ENCODE measurements at regions of chr9 and their contacts with region 1.

Region 1: GRCh38 chr9:129584136-129584535 is 36.8 kb downstream of the C9orf50 start:
- DNase-seq: peak in 8 of 9 donors; percentile 51 to 69 (median 62)
- ATAC-seq: peak; percentile 88
- H3K4me3 ChIP-seq: no peak overlapping the region
- H3K4me3 Mint-ChIP-seq: peak overlapping the region in 7 of 10 donors; percentile 4 to 65 (median 31)
- H3K27ac ChIP-seq: peak overlapping the region; percentile 30
- H3K27ac Mint-ChIP-seq: peak overlapping the region; percentile 43 to 92 (median 76)
- H3K4me1 ChIP-seq: peaks cover 25 to 26% of the 10 kb centered on the region in 2 donors
- H3K4me1 Mint-ChIP-seq: peaks cover 15 to 88% (median 53%) of the 10 kb centered on the region in 7 donors
- H3K27me3 ChIP-seq: no peaks in the 10 kb centered on the region
- H3K27me3 Mint-ChIP-seq: no peaks in the 10 kb centered on the region

Region 2: DNA sequence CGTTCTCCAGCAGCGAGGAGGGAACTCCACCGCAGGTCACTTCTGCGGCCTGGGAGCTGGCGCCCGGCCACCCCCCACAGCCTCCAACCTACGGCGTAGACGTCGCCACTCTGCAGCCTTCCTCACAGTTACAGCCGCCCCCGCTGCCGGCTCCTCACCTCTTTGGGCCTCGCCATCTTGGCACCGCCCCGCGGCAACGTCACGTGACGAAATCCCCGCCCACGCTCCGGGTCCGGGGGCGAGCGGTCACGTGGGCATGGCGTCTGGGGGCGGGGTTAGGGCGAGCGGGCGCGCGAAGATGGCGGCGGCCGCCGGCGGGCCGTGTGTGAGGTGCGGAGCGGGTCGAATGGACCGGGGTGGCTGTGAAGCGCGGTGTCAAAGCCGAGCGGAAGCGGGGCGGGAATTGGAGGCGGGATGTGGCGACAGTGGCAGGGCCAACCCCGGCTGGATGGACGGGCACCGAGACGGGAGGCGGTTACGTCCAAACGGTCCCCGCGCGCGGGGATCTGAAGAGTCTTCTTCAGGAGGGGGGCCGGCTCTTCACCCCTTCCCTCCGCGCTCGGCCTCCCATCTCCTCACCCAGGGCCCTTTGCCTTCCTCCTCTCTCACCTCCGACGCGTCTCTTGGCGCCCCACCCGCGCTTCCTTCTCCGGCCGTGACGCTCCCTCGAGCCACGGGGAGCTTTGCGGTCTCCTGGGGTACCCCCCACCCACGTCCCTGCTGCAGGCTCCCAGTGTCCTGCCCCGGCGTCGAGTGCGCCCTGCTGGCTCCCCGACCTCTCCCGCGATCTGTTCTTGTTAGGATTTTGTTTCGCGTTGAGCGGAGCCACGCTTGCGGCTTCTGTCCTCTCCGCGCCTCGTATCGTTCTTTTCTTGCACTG is 636.5 kb before region 1 on chr9 and contains the starts of genes DOLK and NUP188:
- CTCF ChIA-PET with region 1: no interaction called
- POLR2A ChIA-PET with region 1: no interaction called
- intact Hi-C with region 1: no loop called
- DNase-seq: peak; percentile 96 to 100 (median 98)
- ATAC-seq: peak; percentile 95
- H3K4me3 ChIP-seq: peak within 1 kb of the TSS; percentile 87
- H3K4me3 Mint-ChIP-seq: peak within 1 kb of the TSS; percentile 93 to 99 (median 98)
- H3K27ac ChIP-seq: peak within 1 kb of the TSS; percentile 97
- H3K27ac Mint-ChIP-seq: peak within 1 kb of the TSS; percentile 89 to 99 (median 97)
- H3K4me1 ChIP-seq: peaks cover 8 to 14% of the 10 kb centered on the region in 2 donors
- H3K4me1 Mint-ChIP-seq: peaks cover 16 to 49% (median 32%) of the 10 kb centered on the region in 7 donors
- H3K27me3 ChIP-seq: no peaks in the 10 kb centered on the region
- H3K27me3 Mint-ChIP-seq: no peaks in the 10 kb centered on the region
- total RNA-seq, gene DOLK: 6.0 to 12.8 (median 9.5) TPM
- total RNA-seq, gene NUP188: 55.7 to 98.7 (median 63.7) TPM

Region 3: GRCh38 chr9:129487642-129488409 is 96.3 kb before region 1 on chr9:
- CTCF ChIA-PET with region 1: no interaction called
- POLR2A ChIA-PET with region 1: no interaction called
- intact Hi-C with region 1: loop called in 1 of 2 experiments (anchors 1 kb)
- DNase-seq: peak in 5 of 9 donors; percentile 29 to 54 (median 43)
- ATAC-seq: peak; percentile 3
- H3K4me3 ChIP-seq: peak overlapping the region; percentile 70
- H3K4me3 Mint-ChIP-seq: peak overlapping the region; percentile 75 to 92 (median 90)
- H3K27ac ChIP-seq: peak overlapping the region; percentile 66
- H3K27ac Mint-ChIP-seq: peak overlapping the region; percentile 87 to 99 (median 94)
- H3K4me1 ChIP-seq: peaks cover 32 to 46% of the 10 kb centered on the region in 2 donors
- H3K4me1 Mint-ChIP-seq: peaks cover 36 to 68% (median 58%) of the 10 kb centered on the region in 7 donors
- H3K27me3 ChIP-seq: no peaks in the 10 kb centered on the region
- H3K27me3 Mint-ChIP-seq: no peaks in the 10 kb centered on the region

Region 4: GRCh38 chr9:129597355-129598088 is 13.4 kb after region 1 on chr9:
- CTCF ChIA-PET with region 1: no interaction called
- POLR2A ChIA-PET with region 1: interaction called, 4 read pairs
- intact Hi-C with region 1: loop called in 1 of 2 experiments (anchors 2 kb)
- DNase-seq: peak in 1 of 9 donors; percentile 68
- ATAC-seq: peak; percentile 72
- H3K4me3 ChIP-seq: peak overlapping the region; percentile 46
- H3K4me3 Mint-ChIP-seq: peak overlapping the region; percentile 54 to 77 (median 67)
- H3K27ac ChIP-seq: no peak overlapping the region
- H3K27ac Mint-ChIP-seq: peak overlapping the region in 5 of 9 donors; percentile 31 to 76 (median 61)
- H3K4me1 ChIP-seq: peaks cover 10% of the 10 kb centered on the region in 2 donors
- H3K4me1 Mint-ChIP-seq: peaks cover 13 to 46% (median 20%) of the 10 kb centered on the region in 7 donors
- H3K27me3 ChIP-seq: no peaks in the 10 kb centered on the region
- H3K27me3 Mint-ChIP-seq: peaks cover 0 to 8% (median 5%) of the 10 kb centered on the region in 5 donors

Region 5: DNA sequence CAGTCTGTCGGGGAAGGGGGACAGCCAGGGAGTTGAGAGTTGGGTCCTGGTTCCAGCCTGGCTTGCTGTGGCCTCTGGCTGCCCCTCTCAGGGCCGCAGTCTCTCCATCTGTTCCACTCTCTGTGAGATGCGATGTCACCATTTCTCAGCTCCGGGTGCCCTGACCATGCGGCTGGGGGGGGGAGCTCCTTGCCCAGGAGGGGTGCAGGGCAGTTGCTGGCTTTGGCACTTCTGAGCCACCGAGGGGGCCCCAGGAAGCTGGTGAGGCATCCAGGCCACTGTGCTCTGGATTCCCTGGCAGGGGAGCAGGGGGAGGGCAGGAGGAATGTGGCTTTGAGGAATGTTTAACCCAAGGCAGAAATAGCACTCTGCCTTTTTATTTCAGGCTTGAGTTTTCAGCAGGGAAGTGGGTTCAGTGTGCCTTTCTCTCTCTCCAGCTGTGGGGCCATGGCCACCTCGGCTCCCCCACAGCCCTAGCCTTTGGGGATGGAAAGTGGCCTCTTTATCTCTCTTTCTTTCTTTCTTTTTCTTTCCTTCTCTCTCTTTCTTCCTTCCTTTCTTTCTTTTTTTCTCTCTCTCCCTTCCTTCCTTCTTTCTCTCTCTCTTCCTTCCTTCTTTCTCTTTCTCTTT is 599.1 kb after region 1 on chr9:
- CTCF ChIA-PET with region 1: no interaction called
- POLR2A ChIA-PET with region 1: no interaction called
- intact Hi-C with region 1: no loop called
- DNase-seq: no peak
- ATAC-seq: no peak
- H3K4me3 ChIP-seq: no peak overlapping the region
- H3K4me3 Mint-ChIP-seq: no peak overlapping the region
- H3K27ac ChIP-seq: no peak overlapping the region
- H3K27ac Mint-ChIP-seq: no peak overlapping the region
- H3K4me1 ChIP-seq: no peaks in the 10 kb centered on the region
- H3K4me1 Mint-ChIP-seq: no peaks in the 10 kb centered on the region
- H3K27me3 ChIP-seq: no peaks in the 10 kb centered on the region
- H3K27me3 Mint-ChIP-seq: no peaks in the 10 kb centered on the region

Measured in naive thymus-derived CD4-positive, alpha-beta T cell (primary cell).